B cell (primary cell): ENCODE measurements at regions of chr1 and their contacts with region 1.

Region 1: DNA sequence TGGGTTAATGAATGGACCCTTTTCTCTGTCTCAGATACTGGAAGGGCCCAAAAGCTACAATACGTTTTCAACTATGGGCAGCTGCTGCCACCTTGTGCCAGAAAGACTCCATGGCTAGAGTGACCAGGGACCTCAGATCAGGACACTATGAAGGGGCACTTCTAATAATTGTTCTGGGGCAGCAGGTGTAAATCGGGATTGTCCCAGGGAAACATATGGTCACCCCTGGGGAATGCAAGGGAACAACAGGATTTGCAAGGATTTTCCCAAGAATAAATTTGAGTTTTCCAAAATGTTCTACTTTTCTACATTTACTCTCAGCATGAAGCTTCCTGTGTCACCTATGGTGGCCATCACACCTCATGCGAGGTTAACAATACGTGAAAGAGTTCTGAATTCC is 12.0 kb upstream of the FCAMR start:
- DNase-seq: peak; percentile 78
- ATAC-seq: peak; percentile 89
- H3K4me3 ChIP-seq: no peak overlapping the region
- H3K4me3 Mint-ChIP-seq: no peak overlapping the region
- H3K27ac ChIP-seq: no peak overlapping the region
- H3K27ac Mint-ChIP-seq: no peak overlapping the region
- H3K4me1 ChIP-seq: no peaks in the 10 kb centered on the region
- H3K4me1 Mint-ChIP-seq: no peaks in the 10 kb centered on the region
- H3K27me3 ChIP-seq: peaks cover 0 to 4% (median 0%) of the 10 kb centered on the region in 4 experiments
- H3K27me3 Mint-ChIP-seq: peaks cover 7% of the 10 kb centered on the region
- CTCF ChIP-seq: peak; percentile 90

Region 2: GRCh38 chr1:206612129-206612876 is 369.9 kb before region 1 on chr1 and contains the start of gene EIF2D:
- CTCF ChIA-PET with region 1: interaction called, 24 read pairs
- POLR2A ChIA-PET with region 1: interaction called, 5 read pairs
- intact Hi-C with region 1: loop called (anchors 1 kb)
- DNase-seq: peak; percentile 96
- ATAC-seq: peak; percentile 100
- H3K4me3 ChIP-seq: peak within 1 kb of the TSS; percentile 61 to 87 (median 86)
- H3K4me3 Mint-ChIP-seq: peak within 1 kb of the TSS; percentile 93
- H3K27ac ChIP-seq: peak within 1 kb of the TSS; percentile 70 to 93
- H3K27ac Mint-ChIP-seq: peak within 1 kb of the TSS; percentile 96
- H3K4me1 ChIP-seq: peaks cover 8 to 12% of the 10 kb centered on the region in 2 donors
- H3K4me1 Mint-ChIP-seq: peaks cover 19% of the 10 kb centered on the region
- H3K27me3 ChIP-seq: no peaks in the 10 kb centered on the region
- H3K27me3 Mint-ChIP-seq: no peaks in the 10 kb centered on the region
- CTCF ChIP-seq: peak; percentile 88
- total RNA-seq, gene EIF2D: 60.6 and 62.2 TPM in 2 replicates

Region 3: DNA sequence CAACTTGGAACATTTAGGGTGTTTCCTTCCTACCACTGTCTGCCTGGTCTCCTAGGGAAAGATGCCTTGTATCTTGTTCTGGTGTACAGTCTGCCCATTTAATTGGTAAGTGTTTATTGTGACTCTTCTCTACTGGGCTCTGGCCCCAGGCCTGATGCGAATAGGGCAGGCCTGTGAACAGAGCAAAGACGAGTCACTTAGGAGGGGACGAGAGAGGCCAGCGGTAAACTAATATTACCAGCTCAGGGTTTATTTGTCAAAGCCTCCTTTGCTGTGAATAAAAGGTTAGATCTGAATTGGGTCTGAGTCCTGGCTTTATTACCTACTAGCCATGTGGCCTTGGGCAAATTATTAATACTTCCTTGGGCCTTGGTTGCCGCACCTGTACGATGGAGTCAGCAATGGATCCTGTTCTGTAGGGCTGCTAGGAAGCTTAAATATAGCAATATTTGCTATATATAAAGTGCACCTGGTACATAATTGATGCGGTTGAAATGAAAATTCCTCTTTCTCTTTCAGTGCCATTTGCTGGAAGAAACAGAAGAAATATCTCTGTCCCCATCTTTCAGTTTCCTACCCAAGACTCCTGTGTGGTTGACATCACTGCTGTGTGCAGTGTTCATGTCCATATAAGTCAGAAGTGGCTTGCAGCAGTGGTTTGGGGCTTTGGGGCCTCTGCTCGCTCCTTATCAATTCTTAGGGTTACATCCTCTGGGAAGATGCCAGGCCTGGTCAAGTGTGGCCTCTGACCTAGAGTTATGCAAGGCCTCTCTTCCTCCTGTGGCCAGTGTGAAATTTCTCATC is 265.1 kb before region 1 on chr1:
- CTCF ChIA-PET with region 1: interaction called, 89 read pairs
- POLR2A ChIA-PET with region 1: no interaction called
- intact Hi-C with region 1: no loop called
- DNase-seq: peak; percentile 49
- ATAC-seq: no peak
- H3K4me3 ChIP-seq: no peak overlapping the region
- H3K4me3 Mint-ChIP-seq: peak overlapping the region; percentile 24
- H3K27ac ChIP-seq: peak overlapping the region; percentile 35 to 75
- H3K27ac Mint-ChIP-seq: peak overlapping the region; percentile 81
- H3K4me1 ChIP-seq: peaks cover 70 to 77% of the 10 kb centered on the region in 2 donors
- H3K4me1 Mint-ChIP-seq: peaks cover 81% of the 10 kb centered on the region
- H3K27me3 ChIP-seq: no peaks in the 10 kb centered on the region
- H3K27me3 Mint-ChIP-seq: no peaks in the 10 kb centered on the region
- CTCF ChIP-seq: no peak

Region 4: GRCh38 chr1:206803221-206803730 is 178.9 kb before region 1 on chr1:
- CTCF ChIA-PET with region 1: interaction called, 25 read pairs
- POLR2A ChIA-PET with region 1: no interaction called
- intact Hi-C with region 1: no loop called
- DNase-seq: peak; percentile 70
- ATAC-seq: peak; percentile 90
- H3K4me3 ChIP-seq: no peak overlapping the region
- H3K4me3 Mint-ChIP-seq: peak overlapping the region; percentile 13
- H3K27ac ChIP-seq: no peak overlapping the region
- H3K27ac Mint-ChIP-seq: peak overlapping the region; percentile 87
- H3K4me1 ChIP-seq: peaks cover 4 to 19% of the 10 kb centered on the region in 2 donors
- H3K4me1 Mint-ChIP-seq: peaks cover 35% of the 10 kb centered on the region
- H3K27me3 ChIP-seq: no peaks in the 10 kb centered on the region
- H3K27me3 Mint-ChIP-seq: no peaks in the 10 kb centered on the region
- CTCF ChIP-seq: no peak

Region 5: DNA sequence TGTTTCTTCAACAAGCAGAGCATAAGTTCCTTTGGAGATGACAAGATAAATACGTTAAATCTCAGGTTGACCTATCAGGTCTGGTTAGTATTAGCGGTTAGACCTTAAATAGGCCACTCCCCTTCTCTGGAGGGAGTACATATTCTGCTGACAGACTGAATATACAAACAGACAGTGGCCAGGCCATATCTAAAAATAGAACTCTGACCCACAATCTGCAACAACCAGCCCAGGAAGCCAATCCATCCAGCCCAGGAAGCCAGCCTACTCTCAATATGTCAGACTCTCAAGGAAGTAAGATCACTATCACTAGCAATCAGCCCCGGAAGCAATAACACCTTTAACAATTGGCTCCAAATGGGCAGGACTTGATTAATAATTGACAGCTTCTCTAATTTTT is 110.1 kb before region 1 on chr1:
- CTCF ChIA-PET with region 1: interaction called, 13 read pairs
- POLR2A ChIA-PET with region 1: no interaction called
- intact Hi-C with region 1: no loop called
- DNase-seq: no peak
- ATAC-seq: no peak
- H3K4me3 ChIP-seq: no peak overlapping the region
- H3K4me3 Mint-ChIP-seq: no peak overlapping the region
- H3K27ac ChIP-seq: no peak overlapping the region
- H3K27ac Mint-ChIP-seq: no peak overlapping the region
- H3K4me1 ChIP-seq: no peaks in the 10 kb centered on the region
- H3K4me1 Mint-ChIP-seq: no peaks in the 10 kb centered on the region
- H3K27me3 ChIP-seq: no peaks in the 10 kb centered on the region
- H3K27me3 Mint-ChIP-seq: peaks cover 3% of the 10 kb centered on the region
- CTCF ChIP-seq: no peak

Region 6: DNA sequence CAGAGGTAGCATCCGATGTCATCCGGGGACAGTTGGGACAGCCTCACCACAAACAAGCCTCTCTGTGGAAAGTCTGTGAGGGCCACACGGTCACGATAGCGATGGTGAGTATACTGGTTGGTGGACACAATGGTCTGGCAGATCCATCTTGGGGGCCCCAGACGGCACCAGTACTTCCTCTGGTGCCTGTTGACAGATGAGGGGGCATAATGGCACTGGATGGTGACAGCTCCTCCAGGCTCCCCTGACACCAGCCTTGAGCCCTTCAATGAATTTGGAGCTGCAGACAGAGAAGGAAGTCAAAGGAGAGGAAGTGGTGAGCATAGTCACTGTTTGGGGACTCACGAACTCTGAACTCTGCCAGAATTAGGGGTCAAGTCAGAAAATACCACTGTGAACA is 19.9 kb before region 1 on chr1:
- CTCF ChIA-PET with region 1: interaction called, 77 read pairs
- POLR2A ChIA-PET with region 1: no interaction called
- intact Hi-C with region 1: no loop called
- DNase-seq: no peak
- ATAC-seq: no peak
- H3K4me3 ChIP-seq: no peak overlapping the region
- H3K4me3 Mint-ChIP-seq: no peak overlapping the region
- H3K27ac ChIP-seq: no peak overlapping the region
- H3K27ac Mint-ChIP-seq: no peak overlapping the region
- H3K4me1 ChIP-seq: peaks cover 8 to 14% of the 10 kb centered on the region in 2 donors
- H3K4me1 Mint-ChIP-seq: peaks cover 14% of the 10 kb centered on the region
- H3K27me3 ChIP-seq: no peaks in the 10 kb centered on the region
- H3K27me3 Mint-ChIP-seq: no peaks in the 10 kb centered on the region
- CTCF ChIP-seq: no peak

Region 7: DNA sequence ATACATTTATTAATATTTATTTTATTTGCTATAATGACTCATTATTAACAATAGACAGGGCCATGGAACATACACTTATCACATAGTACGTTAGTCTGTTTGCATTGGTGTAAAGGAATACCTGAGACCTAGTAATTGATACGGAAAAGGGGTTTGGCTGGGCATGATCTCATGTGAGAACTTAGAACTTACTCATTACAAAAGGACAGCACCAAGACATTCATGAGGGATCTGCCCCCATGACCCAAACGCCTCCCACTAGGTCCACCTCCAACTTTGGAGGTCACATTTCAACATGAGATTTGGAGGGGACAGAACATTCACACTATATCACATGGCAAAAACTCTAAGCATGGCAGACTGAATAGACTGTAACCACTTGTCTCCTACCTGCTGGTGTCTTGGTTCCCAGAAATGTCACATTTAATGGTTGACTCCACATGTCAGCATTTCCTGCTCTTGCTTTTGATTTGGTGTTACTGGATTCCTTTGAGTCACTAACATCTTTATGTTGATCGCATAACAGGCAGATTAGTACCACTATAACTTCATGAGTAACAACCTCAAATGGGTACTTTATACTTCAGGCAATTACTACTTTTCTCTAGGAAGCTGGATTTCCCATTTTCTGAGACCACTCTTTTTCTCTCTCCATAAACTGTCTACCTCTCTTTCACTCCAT is 53.8 kb after region 1 on chr1:
- CTCF ChIA-PET with region 1: no interaction called
- POLR2A ChIA-PET with region 1: no interaction called
- intact Hi-C with region 1: no loop called
- DNase-seq: no peak
- ATAC-seq: no peak
- H3K4me3 ChIP-seq: no peak overlapping the region
- H3K4me3 Mint-ChIP-seq: no peak overlapping the region
- H3K27ac ChIP-seq: no peak overlapping the region
- H3K27ac Mint-ChIP-seq: no peak overlapping the region
- H3K4me1 ChIP-seq: no peaks in the 10 kb centered on the region
- H3K4me1 Mint-ChIP-seq: no peaks in the 10 kb centered on the region
- H3K27me3 ChIP-seq: peaks cover 0 to 23% (median 4%) of the 10 kb centered on the region in 4 experiments
- H3K27me3 Mint-ChIP-seq: peaks cover 38% of the 10 kb centered on the region
- CTCF ChIP-seq: no peak

Region 8: GRCh38 chr1:207248544-207249198 is 266.5 kb after region 1 on chr1:
- CTCF ChIA-PET with region 1: no interaction called
- POLR2A ChIA-PET with region 1: no interaction called
- intact Hi-C with region 1: no loop called
- DNase-seq: no peak
- ATAC-seq: no peak
- H3K4me3 ChIP-seq: no peak overlapping the region
- H3K4me3 Mint-ChIP-seq: no peak overlapping the region
- H3K27ac ChIP-seq: no peak overlapping the region
- H3K27ac Mint-ChIP-seq: no peak overlapping the region
- H3K4me1 ChIP-seq: no peaks in the 10 kb centered on the region
- H3K4me1 Mint-ChIP-seq: peaks cover 12% of the 10 kb centered on the region
- H3K27me3 ChIP-seq: no peaks in the 10 kb centered on the region
- H3K27me3 Mint-ChIP-seq: no peaks in the 10 kb centered on the region
- CTCF ChIP-seq: no peak

Region 9: GRCh38 chr1:207499573-207499972 is 517.4 kb after region 1 on chr1:
- CTCF ChIA-PET with region 1: interaction called, 14 read pairs
- POLR2A ChIA-PET with region 1: no interaction called
- intact Hi-C with region 1: no loop called
- DNase-seq: peak; percentile 87
- ATAC-seq: peak; percentile 60
- H3K4me3 ChIP-seq: no peak overlapping the region
- H3K4me3 Mint-ChIP-seq: no peak overlapping the region
- H3K27ac ChIP-seq: no peak overlapping the region
- H3K27ac Mint-ChIP-seq: peak overlapping the region; percentile 60
- H3K4me1 ChIP-seq: peaks cover 26 to 31% of the 10 kb centered on the region in 2 donors
- H3K4me1 Mint-ChIP-seq: peaks cover 42% of the 10 kb centered on the region
- H3K27me3 ChIP-seq: no peaks in the 10 kb centered on the region
- H3K27me3 Mint-ChIP-seq: no peaks in the 10 kb centered on the region
- CTCF ChIP-seq: peak; percentile 96